AG04449 (cell line): ENCODE measurements at regions of chr9 and their contacts with region 1.

Region 1: DNA sequence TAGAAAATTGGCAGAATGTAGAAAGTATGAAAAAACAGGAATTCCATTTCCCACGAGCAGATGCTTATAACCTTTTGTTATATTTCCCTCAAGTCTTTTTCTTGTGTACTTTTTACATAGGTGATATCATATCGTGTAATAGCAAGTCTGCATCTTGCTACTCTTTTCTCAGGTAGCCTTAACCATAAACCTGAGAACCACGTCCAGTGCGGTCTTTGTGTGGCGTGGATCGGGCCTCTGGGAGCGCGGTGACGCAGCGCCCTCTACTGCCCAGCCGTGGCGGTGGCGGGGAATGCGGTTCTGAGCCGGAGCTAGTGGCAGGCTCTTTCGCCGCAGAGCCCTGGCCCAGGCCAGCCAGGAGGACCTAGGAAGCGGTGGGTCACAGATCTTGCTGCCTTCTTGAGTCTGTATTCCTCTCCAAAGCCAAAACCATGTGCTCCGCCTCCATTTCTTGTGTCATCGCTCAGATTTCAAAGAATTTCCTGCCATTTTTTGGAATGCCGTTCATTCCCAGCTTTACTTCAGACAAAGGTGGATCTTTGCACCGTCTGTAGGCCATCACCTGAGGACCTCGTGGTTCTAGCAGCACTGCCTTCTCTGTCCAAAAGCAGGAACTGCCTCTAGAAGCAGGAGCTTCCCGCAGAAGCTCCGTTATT is 71.9 kb downstream of the MVB12B start:
- DNase-seq: no peak
- H3K4me3 ChIP-seq: no peak overlapping the region
- CTCF ChIP-seq: peak; percentile 100

Region 2: GRCh38 chr9:126228781-126229444 is 169.6 kb before region 1 on chr9:
- CTCF ChIA-PET with region 1: interaction called, 10 read pairs
- POLR2A ChIA-PET with region 1: no interaction called
- DNase-seq: no peak
- H3K4me3 ChIP-seq: no peak overlapping the region
- CTCF ChIP-seq: peak; percentile 96

Region 3: GRCh38 chr9:126317513-126317912 is 81.0 kb before region 1 on chr9:
- CTCF ChIA-PET with region 1: interaction called, 21 read pairs
- POLR2A ChIA-PET with region 1: no interaction called
- DNase-seq: no peak
- H3K4me3 ChIP-seq: no peak overlapping the region
- CTCF ChIP-seq: peak; percentile 48

Region 4: GRCh38 chr9:126386088-126386487 is 12.4 kb before region 1 on chr9:
- CTCF ChIA-PET with region 1: interaction called, 49 read pairs
- POLR2A ChIA-PET with region 1: no interaction called
- DNase-seq: no peak
- H3K4me3 ChIP-seq: no peak overlapping the region
- CTCF ChIP-seq: peak; percentile 44

Region 5: DNA sequence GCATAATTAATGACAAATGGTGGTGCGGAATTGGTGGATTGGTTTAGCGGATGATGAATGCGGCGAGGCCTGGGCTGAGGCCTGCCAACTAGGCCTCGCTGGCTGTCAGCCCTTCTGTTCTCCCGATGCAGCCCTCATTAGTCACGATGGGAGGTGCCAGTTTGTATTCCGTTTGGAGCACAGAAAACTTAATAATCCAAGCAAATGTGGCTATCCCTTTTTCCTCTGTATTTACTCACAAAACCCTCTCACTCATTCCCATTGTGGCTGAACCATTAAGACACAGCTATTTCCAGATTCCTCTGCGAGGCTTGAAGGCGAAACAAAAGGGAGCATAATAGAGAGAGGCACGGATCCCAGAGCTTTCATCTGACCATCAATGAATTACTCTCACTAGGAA is 42.4 kb after region 1 on chr9:
- CTCF ChIA-PET with region 1: interaction called, 14 read pairs
- POLR2A ChIA-PET with region 1: no interaction called
- DNase-seq: peak; percentile 9
- H3K4me3 ChIP-seq: no peak overlapping the region
- CTCF ChIP-seq: no peak

Region 6: DNA sequence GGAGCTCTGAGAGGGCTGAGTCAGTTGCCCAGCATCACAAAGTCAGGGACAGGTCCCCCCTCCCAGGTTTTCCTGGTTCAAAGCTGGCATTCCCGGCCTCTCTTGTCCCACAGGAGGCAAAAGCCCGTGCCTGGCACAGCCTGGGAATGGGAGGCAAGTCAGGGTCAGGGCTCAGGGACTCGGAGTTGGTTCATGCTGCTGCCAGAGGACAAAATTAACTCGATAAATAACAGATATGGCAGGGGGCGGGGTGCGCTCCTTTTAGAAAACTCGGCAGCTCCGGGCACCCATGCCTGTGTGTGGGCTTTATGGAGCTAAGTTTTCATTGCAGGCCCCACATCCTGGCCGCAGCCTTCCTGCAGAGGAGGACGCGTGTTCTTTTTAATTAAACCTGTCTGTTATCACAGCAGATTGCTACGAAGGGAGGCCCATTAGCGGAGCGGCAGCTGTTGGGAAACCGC is 152.4 kb after region 1 on chr9:
- CTCF ChIA-PET with region 1: no interaction called
- POLR2A ChIA-PET with region 1: no interaction called
- DNase-seq: no peak
- H3K4me3 ChIP-seq: no peak overlapping the region
- CTCF ChIP-seq: no peak